Mammary epithelial cell (primary cell): ENCODE measurements at regions of chr6 and their contacts with region 1.

Region 1: DNA sequence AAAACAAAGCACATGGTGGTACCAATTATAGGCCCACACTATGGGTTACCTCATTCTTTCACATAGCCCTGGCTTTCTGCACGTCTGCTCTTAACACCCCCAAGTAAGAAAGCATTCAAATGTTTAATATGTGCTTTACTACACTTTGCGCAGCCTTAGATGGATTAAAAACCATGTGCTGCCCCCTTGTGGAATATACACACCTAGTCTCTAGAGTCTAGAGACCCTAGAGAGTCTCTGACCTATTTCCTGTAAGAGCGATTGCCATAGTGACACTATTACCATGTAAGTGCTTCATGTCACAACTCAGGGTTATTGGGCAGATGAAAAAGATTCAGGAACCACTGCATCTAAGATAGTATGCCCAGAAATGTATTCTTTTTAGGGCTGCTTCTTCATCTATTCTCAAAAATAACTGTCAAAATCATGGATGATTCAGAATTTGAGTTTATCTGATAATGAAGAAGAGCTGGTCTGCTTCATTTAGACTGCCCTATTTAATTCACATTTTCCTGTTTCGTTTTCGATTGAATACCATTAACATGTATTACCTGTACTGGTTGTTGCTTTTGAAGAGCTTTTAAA is 186.3 kb downstream of the ADGB start:
- DNase-seq: peak; percentile 11
- H3K4me3 ChIP-seq: no peak overlapping the region
- H3K27ac ChIP-seq: no peak overlapping the region
- H3K4me1 ChIP-seq: no peaks in the 10 kb centered on the region
- H3K27me3 ChIP-seq: no peaks in the 10 kb centered on the region
- CTCF ChIP-seq: peak; percentile 48 to 64

Region 2: DNA sequence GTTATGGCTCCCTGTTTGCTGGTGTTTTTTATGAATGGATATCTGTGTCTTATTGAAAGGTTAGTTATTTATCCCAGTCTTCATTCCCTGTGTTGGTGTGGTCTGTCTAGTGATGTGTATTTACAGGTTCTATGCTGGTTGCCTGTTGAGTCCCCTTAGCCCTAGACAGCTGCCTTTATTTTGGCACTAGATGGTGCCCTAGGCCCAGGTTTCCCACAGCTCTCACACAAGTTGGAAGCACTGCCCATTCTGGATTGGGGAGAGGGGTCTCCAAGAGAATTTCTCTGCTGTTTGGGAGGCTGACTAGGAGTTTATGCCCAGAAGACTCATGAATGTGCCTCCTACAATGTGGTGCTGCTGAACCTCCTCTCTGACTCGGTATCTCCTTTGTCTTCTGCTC is 743.8 kb before region 1 on chr6:
- CTCF ChIA-PET with region 1: no interaction called
- dilution Hi-C with region 1: no loop called
- in situ Hi-C with region 1: no loop called
- intact Hi-C with region 1: loop called (anchors 1 kb)
- DNase-seq: peak; percentile 11
- H3K4me3 ChIP-seq: no peak overlapping the region
- H3K27ac ChIP-seq: no peak overlapping the region
- H3K4me1 ChIP-seq: no peaks in the 10 kb centered on the region
- H3K27me3 ChIP-seq: peaks cover 2% of the 10 kb centered on the region
- CTCF ChIP-seq: peak; percentile 51 to 76